Heart left ventricle (tissue), 16 donors: ENCODE measurements at regions of chr19 and their contacts with region 1.

Region 1: DNA sequence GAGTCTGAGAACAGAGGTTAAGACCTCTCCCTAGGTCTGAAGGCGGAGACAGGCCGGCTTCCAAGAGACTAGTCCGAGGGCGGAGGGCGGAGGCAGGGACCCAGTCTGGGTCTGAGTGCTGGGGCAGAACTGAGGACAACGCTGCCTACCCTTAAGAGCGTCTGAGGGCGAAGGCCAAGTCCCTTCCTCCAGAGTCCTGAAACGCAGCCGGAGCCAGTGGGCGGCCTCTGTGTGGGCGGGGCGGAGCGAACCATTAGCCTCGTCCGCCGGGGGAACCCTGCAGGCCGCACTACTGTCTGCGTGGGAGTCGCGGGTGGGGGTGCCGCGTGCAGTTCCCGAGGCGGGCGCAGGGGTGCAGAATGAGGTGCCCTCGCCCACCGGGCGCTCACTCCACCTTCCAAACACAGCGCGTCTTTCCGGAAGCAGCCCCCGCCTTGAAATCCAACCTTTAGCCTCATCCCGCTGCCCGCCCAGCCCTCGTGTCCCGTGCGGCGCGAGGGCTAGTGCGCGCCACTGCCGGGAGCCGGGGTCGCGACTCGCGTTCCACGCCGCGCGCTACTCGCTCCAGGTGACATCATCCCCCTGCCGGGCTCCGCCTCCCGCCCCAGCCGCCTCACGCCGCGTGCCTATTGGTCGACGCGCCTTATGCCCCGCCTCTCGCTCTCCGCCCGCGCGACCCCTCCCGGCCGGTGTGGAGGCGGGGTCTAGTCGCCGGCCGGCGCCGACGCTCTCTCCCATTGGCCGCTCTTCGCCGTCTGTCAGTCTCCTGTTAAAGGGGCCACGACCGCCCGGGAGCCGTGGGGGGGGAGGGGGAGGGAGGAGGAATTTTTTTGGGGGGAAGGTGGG is at the start of gene C19orf73:
- DNase-seq: peak; percentile 95 to 98 (median 96)
- ATAC-seq: peak; percentile 88 to 94 (median 92)
- H3K4me3 ChIP-seq: peak within 1 kb of the TSS; percentile 36 to 79 (median 65)
- H3K27ac ChIP-seq: peak within 1 kb of the TSS; percentile 93 to 99 (median 98)
- H3K4me1 ChIP-seq: peaks cover 5 to 51% (median 29%) of the 10 kb centered on the region in 12 donors
- H3K27me3 ChIP-seq: peaks cover 0 to 13% (median 0%) of the 10 kb centered on the region in 9 donors
- CTCF ChIP-seq: peak in 7 of 12 donors; percentile 8 to 30 (median 19)
- POLR2A ChIP-seq: peak in 1 of 2 donors; percentile 61
- total RNA-seq, gene C19orf73: 0.69 to 3.1 (median 1.3) TPM

Region 2: GRCh38 chr19:49097455-49098288 is 21.1 kb before region 1 on chr19:
- intact Hi-C with region 1: loop called in 1 of 10 experiments (anchors 2 kb)
- DNase-seq: peak; percentile 54 to 73 (median 62)
- ATAC-seq: peak; percentile 37 to 66 (median 57)
- H3K4me3 ChIP-seq: no peak overlapping the region
- H3K27ac ChIP-seq: no peak overlapping the region
- H3K4me1 ChIP-seq: peaks cover 0 to 32% (median 19%) of the 10 kb centered on the region in 12 donors
- H3K27me3 ChIP-seq: no peaks in the 10 kb centered on the region
- CTCF ChIP-seq: peak; percentile 97 to 100 (median 99)
- POLR2A ChIP-seq: no peak

Region 3: DNA sequence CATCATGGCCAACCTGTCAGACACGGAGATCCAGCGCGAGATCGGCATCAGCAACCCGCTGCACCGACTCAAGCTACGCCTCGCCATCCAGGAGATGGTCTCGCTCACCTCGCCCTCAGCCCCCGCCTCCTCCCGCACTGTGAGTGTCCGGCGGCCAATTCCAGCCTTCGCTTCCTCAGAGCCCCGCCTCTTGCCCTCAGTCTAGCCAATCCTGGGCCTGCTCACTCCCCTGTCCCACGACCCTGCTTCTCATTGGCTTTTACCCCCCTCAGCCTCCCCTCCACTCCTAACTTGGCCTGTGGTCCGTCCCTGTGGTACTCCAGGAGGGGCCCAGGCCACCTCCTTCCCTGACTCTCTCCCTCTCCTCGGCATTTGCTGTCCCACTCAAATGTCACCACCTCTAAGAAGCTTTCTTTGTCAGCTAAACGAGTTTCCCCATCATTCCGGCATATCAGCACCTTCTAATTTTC is 24.1 kb after region 1 on chr19:
- intact Hi-C with region 1: loop called in 7 of 10 experiments (anchors 1 to 5 kb)
- DNase-seq: peak; percentile 93 to 96 (median 93)
- ATAC-seq: peak; percentile 97 to 98 (median 98)
- H3K4me3 ChIP-seq: peak overlapping the region in 11 of 12 donors; percentile 21 to 64 (median 57)
- H3K27ac ChIP-seq: peak overlapping the region in 3 of 12 donors; percentile 30 to 54 (median 47)
- H3K4me1 ChIP-seq: peaks cover 0 to 26% (median 15%) of the 10 kb centered on the region in 12 donors
- H3K27me3 ChIP-seq: no peaks in the 10 kb centered on the region
- CTCF ChIP-seq: no peak
- POLR2A ChIP-seq: peak in 1 of 2 donors; percentile 37

Region 4: GRCh38 chr19:49160450-49161189 is 41.8 kb after region 1 on chr19:
- intact Hi-C with region 1: no loop called
- DNase-seq: peak in 1 of 5 donors; percentile 14
- ATAC-seq: no peak
- H3K4me3 ChIP-seq: no peak overlapping the region
- H3K27ac ChIP-seq: peak overlapping the region in 4 of 12 donors; percentile 97 to 99 (median 98)
- H3K4me1 ChIP-seq: peaks cover 1 to 53% (median 27%) of the 10 kb centered on the region in 12 donors
- H3K27me3 ChIP-seq: no peaks in the 10 kb centered on the region
- CTCF ChIP-seq: no peak
- POLR2A ChIP-seq: no peak